PC-3 (cell line): ENCODE measurements at regions of chr18 and their contacts with region 1.

Region 1: DNA sequence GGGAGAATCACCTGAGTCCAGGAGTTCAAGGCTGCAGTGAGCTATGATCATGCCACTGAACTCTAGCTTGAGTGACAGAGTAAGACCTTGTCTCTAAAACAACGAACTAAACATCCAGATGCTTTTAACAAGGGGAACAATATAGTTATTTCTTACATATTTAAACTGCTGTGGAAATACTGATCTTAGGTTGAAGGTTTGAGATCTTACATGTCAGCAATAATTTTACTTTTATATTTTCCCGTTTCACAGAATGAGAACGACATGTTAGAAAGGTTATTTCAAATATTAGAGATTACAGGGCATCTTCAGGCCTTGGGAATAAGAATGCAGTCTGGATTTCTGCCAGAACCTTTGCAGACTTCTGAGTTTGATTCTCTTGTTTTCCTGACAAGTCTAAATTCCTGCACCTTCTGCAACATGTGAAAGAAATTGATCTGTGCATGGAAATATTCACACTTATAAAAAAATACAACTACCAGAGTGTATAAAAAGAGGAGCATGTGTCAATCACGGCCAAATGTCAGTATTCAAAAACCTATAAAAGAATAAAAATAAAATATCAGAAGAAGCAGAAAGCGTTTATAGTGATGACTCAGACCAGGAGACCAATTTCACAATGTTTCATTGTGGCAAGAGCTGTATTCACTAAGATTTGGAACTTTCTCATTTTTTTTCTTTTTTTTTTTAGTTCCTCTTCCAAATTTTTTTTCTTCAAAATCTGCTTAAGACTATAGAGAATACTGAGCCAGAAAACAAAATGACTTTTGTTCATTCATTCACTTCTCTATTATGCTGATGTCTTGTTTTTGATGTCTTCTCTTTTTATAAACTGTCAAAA is 29.6 kb downstream of the COLEC12 start:
- DNase-seq: peak; percentile 38
- ATAC-seq: 0 out of 2 replicates have a peak, but pooled peaks have one; percentile 24
- H3K4me3 ChIP-seq: no peak overlapping the region
- H3K27ac ChIP-seq: no peak overlapping the region
- H3K4me1 ChIP-seq: peaks cover 12% of the 10 kb centered on the region; the same call in 1 of the 2 replicates
- H3K27me3 ChIP-seq: peaks cover 33% of the 10 kb centered on the region
- CTCF ChIP-seq: no peak

Region 2: GRCh38 chr18:212780-213179 is 258.1 kb before region 1 on chr18:
- CTCF ChIA-PET with region 1: no interaction called
- POLR2A ChIA-PET with region 1: interaction called, 13 read pairs
- intact Hi-C with region 1: no loop called
- DNase-seq: no peak
- ATAC-seq: no peak
- H3K4me3 ChIP-seq: no peak overlapping the region
- H3K27ac ChIP-seq: no peak overlapping the region
- H3K4me1 ChIP-seq: no peaks in the 10 kb centered on the region
- H3K27me3 ChIP-seq: no peaks in the 10 kb centered on the region
- CTCF ChIP-seq: peak; percentile 48